WTC11 (cell line): ENCODE measurements at regions of chr5 and their contacts with region 1.

Region 1: DNA sequence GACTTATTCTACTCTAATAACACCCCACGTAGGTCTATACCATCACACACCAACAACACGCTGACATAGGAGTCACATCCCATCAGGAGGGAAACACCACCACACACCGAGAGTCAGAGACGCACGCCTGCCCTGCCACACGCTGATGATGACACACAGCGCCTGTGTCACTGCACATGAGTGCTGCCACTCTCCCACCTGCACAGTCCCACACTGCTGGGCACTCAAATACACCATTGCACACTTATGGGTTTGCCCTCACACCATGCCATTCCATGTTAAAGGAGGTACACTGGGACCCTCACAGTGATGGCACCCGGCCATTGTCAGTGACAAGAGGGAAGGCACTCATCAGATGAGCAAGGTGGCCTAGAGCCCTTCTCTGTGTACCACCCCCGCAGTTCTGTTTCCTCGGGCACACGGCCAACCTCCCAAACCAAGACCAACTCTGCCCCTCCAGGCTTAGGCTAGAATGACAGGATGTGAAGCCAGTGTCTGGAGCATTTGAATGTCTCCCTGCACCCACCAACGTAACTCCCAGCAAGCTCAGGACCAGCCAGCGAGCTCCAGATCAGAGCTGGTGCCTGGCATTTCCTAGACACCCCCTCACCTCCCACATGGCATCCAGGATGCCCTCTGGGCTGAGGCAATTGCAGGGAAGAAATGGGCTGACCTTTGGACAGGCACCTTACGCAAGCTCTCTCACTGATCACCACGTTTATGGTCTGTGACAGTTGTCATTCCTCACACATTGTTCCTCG is 3.6 kb upstream of the CPLX2 start:
- DNase-seq: peak; percentile 65
- ATAC-seq: peak; percentile 59
- H3K4me3 Mint-ChIP-seq: no peak overlapping the region
- H3K27ac Mint-ChIP-seq: no peak overlapping the region
- H3K4me1 Mint-ChIP-seq: peaks cover 30% of the 10 kb centered on the region
- H3K27me3 Mint-ChIP-seq: peaks cover 15% of the 10 kb centered on the region
- CTCF ChIP-seq: peak; percentile 28; the same call in 1 of the 2 replicates

Region 2: GRCh38 chr5:175609526-175609925 is 258.2 kb before region 1 on chr5:
- CTCF ChIA-PET with region 1: no interaction called
- POLR2A ChIA-PET with region 1: no interaction called
- DNase-seq: no peak
- ATAC-seq: no peak
- H3K4me3 Mint-ChIP-seq: no peak overlapping the region
- H3K27ac Mint-ChIP-seq: no peak overlapping the region
- H3K4me1 Mint-ChIP-seq: peaks cover 14% of the 10 kb centered on the region
- H3K27me3 Mint-ChIP-seq: peaks cover 7% of the 10 kb centered on the region; the same call in 1 of the 2 replicates
- CTCF ChIP-seq: no peak

Region 3: GRCh38 chr5:175796536-175797499 is 70.9 kb before region 1 on chr5:
- CTCF ChIA-PET with region 1: interaction called, 62 read pairs
- POLR2A ChIA-PET with region 1: interaction called, 7 read pairs
- DNase-seq: peak; percentile 94
- ATAC-seq: peak; percentile 88
- H3K4me3 Mint-ChIP-seq: peak overlapping the region; percentile 80
- H3K27ac Mint-ChIP-seq: no peak overlapping the region
- H3K4me1 Mint-ChIP-seq: peaks cover 33% of the 10 kb centered on the region
- H3K27me3 Mint-ChIP-seq: peaks cover 35% of the 10 kb centered on the region
- CTCF ChIP-seq: no peak

Region 4: GRCh38 chr5:175847503-175847902 is 20.3 kb before region 1 on chr5:
- CTCF ChIA-PET with region 1: interaction called, 24 read pairs
- POLR2A ChIA-PET with region 1: no interaction called
- DNase-seq: peak; percentile 49
- ATAC-seq: peak; percentile 90
- H3K4me3 Mint-ChIP-seq: no peak overlapping the region
- H3K27ac Mint-ChIP-seq: no peak overlapping the region
- H3K4me1 Mint-ChIP-seq: peaks cover 21% of the 10 kb centered on the region
- H3K27me3 Mint-ChIP-seq: no peaks in the 10 kb centered on the region
- CTCF ChIP-seq: peak; percentile 15; the same call in 1 of the 2 replicates

Region 5: DNA sequence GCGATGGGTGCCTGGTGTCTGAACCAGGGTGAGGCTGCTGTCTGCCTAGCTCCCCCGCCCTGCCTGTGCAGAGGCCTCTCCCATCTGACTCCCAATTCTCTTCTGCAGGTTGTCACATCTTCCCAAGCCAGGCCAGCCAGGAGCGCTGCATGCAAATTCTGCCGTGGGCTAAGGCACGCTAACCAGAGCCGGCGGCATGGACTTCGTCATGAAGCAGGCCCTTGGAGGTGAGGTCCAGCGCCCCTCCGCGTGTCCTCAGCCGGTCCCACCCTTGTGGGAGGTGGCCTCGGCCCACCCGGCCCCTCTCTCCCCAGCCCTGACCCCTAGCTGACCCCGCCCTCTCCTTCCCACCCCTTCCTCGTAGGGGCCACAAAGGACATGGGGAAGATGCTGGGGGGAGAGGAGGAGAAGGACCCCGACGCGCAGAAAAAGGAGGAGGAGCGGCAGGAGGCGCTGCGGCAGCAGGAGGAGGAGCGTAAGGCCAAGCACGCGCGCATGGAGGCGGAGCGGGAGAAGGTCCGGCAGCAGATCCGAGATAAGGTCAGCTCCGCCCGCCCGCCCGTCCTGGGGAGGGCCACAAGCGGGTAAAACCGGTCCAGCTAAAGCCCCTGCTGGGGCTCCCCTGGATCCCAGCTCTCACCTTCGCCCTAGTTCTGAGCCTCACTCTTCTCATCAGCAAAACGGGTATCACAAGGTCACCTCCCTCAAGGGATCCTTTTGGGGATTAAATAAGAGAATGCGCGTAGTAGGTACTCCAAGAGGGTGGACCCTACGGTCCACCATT is 11.0 kb after region 1 on chr5:
- CTCF ChIA-PET with region 1: interaction called, 11 read pairs
- POLR2A ChIA-PET with region 1: no interaction called
- DNase-seq: peak; percentile 70
- ATAC-seq: peak; percentile 81
- H3K4me3 Mint-ChIP-seq: peak overlapping the region; percentile 54
- H3K27ac Mint-ChIP-seq: no peak overlapping the region
- H3K4me1 Mint-ChIP-seq: peaks cover 42% of the 10 kb centered on the region
- H3K27me3 Mint-ChIP-seq: peaks cover 13% of the 10 kb centered on the region
- CTCF ChIP-seq: no peak

Region 6: GRCh38 chr5:176429972-176430371 is 562.2 kb after region 1 on chr5:
- CTCF ChIA-PET with region 1: no interaction called
- POLR2A ChIA-PET with region 1: no interaction called
- DNase-seq: no peak
- ATAC-seq: no peak
- H3K4me3 Mint-ChIP-seq: no peak overlapping the region
- H3K27ac Mint-ChIP-seq: no peak overlapping the region
- H3K4me1 Mint-ChIP-seq: no peaks in the 10 kb centered on the region
- H3K27me3 Mint-ChIP-seq: peaks cover 19% of the 10 kb centered on the region
- CTCF ChIP-seq: no peak